AG04450 (cell line): ENCODE measurements at regions of chr14 and their contacts with region 1.

Region 1: DNA sequence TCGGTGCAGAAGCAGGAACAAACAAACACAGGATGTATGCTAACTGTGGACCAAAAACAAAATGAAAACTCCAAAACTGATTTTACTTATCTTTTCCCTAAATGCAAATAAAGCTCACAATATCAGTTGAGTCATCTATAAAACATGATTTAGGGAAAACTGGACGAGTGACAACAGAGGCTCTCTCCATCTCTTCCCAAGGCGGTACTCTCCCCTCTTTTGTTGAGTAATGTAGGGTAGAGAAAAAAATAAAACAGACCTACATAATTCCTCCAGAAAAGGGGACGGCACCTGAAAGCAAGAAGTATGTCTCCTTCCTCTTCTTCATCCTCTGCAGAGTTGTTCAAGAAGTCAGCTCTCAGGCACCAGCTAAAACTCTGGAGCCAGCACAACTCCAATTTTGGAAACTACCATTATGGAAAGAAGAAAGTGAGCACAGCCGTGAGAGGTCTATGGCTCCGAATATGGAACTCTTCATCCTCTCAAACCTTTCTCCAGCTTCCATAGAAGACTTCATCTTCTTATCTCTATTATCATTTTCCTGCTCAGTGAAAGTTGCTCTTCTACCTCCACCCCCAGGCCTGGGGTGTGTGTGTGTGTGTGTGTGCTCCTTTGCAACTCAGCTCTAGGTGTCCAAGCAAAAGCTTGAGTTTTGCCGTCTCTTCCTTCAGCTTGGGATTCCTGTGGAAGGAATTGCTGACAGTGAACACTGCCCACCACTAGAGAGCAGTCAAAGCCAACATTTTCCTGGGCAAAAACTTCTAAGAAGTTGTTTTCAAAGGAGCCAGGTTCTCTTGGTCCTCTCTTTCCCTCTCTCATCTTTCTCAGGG is 155.4 kb downstream of the DIO2 start:
- DNase-seq: peak; percentile 50
- H3K4me3 ChIP-seq: no peak overlapping the region
- H3K27ac ChIP-seq: no peak overlapping the region
- H3K27me3 ChIP-seq: no peaks in the 10 kb centered on the region
- CTCF ChIP-seq: peak; percentile 89

Region 2: GRCh38 chr14:78959674-78960264 is 1096.1 kb before region 1 on chr14:
- CTCF ChIA-PET with region 1: interaction called, 12 read pairs
- POLR2A ChIA-PET with region 1: no interaction called
- DNase-seq: peak; percentile 51
- H3K4me3 ChIP-seq: no peak overlapping the region
- H3K27ac ChIP-seq: no peak overlapping the region
- H3K27me3 ChIP-seq: no peaks in the 10 kb centered on the region
- CTCF ChIP-seq: peak; percentile 93

Region 3: GRCh38 chr14:79265366-79265946 is 790.4 kb before region 1 on chr14:
- CTCF ChIA-PET with region 1: no interaction called
- POLR2A ChIA-PET with region 1: no interaction called
- DNase-seq: no peak
- H3K4me3 ChIP-seq: no peak overlapping the region
- H3K27ac ChIP-seq: no peak overlapping the region
- H3K27me3 ChIP-seq: no peaks in the 10 kb centered on the region
- CTCF ChIP-seq: no peak

Region 4: GRCh38 chr14:80077262-80077661 is 21.4 kb after region 1 on chr14:
- CTCF ChIA-PET with region 1: interaction called, 11 read pairs
- POLR2A ChIA-PET with region 1: no interaction called
- DNase-seq: peak; percentile 23
- H3K4me3 ChIP-seq: no peak overlapping the region
- H3K27ac ChIP-seq: no peak overlapping the region
- H3K27me3 ChIP-seq: no peaks in the 10 kb centered on the region
- CTCF ChIP-seq: no peak

Region 5: GRCh38 chr14:80587075-80587724 is 531.3 kb after region 1 on chr14:
- CTCF ChIA-PET with region 1: interaction called, 27 read pairs
- POLR2A ChIA-PET with region 1: no interaction called
- DNase-seq: no peak
- H3K4me3 ChIP-seq: no peak overlapping the region
- H3K27ac ChIP-seq: no peak overlapping the region
- H3K27me3 ChIP-seq: no peaks in the 10 kb centered on the region
- CTCF ChIP-seq: peak; percentile 45

Region 6: DNA sequence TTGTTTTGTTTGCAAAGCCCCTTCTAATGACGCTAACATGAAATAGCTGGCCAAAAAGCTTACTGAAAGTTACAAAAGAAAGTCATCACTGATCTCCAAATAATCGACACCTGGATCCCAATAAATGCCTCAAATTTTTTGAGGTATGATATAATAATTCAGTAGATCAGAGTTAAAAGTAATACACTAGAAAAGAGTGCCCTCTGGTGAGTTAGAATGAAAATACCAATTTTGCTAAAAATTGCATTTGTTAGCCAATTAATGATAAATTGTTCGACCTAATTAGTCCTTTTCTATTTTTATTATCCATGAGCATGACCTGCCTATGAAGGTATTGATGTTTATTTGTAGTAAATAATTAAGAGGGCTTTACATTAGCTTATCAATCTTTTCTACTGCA is 807.1 kb after region 1 on chr14:
- CTCF ChIA-PET with region 1: interaction called, 64 read pairs
- POLR2A ChIA-PET with region 1: no interaction called
- DNase-seq: no peak
- H3K4me3 ChIP-seq: no peak overlapping the region
- H3K27ac ChIP-seq: no peak overlapping the region
- H3K27me3 ChIP-seq: no peaks in the 10 kb centered on the region
- CTCF ChIP-seq: peak; percentile 46